ENCODE measurements at regions of chr2 and their contacts with region 1.

Region 1: DNA sequence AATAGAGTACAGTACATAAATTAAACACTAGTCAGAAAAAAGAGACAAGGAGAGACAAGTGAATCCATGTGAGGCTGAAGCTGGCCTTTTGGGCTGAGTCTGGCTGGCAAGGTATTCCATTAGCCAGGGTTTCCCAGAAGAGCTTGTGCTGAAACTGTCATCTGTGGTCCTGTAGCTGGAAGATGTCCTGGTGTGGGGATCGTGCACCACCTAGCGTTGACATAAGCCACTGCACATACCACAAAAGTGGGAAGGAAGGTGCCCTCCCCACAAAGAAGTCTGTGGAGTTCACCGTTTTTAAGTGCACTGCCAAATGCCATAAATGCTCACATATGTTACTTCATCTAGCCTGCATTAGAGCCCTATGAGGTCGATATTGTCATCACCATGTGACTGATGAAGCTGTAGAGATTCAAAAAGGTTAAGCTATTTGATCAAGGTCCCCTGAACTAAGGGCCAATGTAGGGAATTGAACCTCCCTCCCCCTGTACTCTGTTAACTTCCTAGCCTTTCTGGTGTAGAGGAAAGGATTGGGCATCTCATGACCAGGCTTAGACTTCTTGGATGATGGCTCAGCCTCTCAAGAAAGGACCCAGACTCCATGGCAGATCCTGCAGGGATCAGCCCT is 31.9 kb upstream of the GALNT14 start:
- DNase-seq: peak in 3 of 5 donors; percentile 22 to 47 (median 28)
- H3K4me3 ChIP-seq: no peak overlapping the region
- H3K27ac ChIP-seq: no peak overlapping the region
- H3K4me1 ChIP-seq: no peaks in the 10 kb centered on the region
- H3K27me3 ChIP-seq: no peaks in the 10 kb centered on the region
- CTCF ChIP-seq: peak in 2 of 3 donors; percentile 14 to 53
- EP300 ChIP-seq: no peak
- POLR2A ChIP-seq: no peak

Region 2: DNA sequence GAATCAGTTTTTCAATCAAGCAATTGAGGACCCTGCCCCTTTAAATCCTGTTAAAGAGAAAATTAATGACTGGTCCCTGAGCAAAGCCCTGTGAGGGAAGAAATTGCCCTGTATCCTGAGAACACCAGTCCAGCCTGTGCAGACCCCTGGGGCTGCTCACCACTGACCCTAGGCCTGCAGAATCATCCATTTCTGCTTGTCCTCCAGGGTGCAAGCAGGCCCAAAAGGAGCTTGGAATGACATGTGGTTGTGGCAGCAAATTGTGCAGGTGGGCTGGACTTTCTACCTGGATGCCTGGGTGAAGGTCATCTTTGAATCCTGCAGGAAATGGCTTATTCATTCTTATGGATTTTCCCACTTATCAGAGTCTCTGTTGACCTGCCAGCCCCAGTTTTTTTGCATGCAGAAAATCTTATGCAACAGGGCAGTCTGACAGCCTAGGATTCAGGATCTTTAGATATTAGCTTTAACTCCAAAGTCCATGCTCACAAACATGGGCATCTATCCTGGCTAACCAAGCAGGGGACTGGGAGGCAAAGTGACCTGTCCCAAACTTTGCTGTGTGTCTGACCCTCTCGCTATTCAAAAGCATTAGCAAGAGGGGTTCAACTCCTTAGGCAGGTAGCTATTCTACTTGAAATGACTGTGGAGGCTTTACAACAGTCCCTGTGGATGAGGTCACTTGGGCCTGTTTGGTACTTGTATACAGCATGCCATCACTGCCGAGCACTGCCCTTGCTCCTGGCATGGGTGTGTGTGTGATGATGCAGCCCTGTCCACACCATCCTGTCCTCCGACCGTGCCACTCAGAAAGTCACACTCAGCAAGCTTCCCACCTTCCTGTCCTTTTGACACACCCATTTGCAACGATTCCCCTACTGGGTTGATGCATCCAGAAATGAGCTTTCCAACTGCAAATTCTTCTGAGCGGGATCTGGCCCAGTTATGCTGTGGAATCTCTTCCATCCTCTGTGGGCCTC is 448.2 kb before region 1 on chr2:
- intact Hi-C with region 1: loop called in 3 of 4 experiments (anchors 1 to 10 kb)
- DNase-seq: no peak
- H3K4me3 ChIP-seq: no peak overlapping the region
- H3K27ac ChIP-seq: no peak overlapping the region
- H3K4me1 ChIP-seq: no peaks in the 10 kb centered on the region
- H3K27me3 ChIP-seq: no peaks in the 10 kb centered on the region
- CTCF ChIP-seq: no peak
- EP300 ChIP-seq: no peak
- POLR2A ChIP-seq: no peak

Region 3: DNA sequence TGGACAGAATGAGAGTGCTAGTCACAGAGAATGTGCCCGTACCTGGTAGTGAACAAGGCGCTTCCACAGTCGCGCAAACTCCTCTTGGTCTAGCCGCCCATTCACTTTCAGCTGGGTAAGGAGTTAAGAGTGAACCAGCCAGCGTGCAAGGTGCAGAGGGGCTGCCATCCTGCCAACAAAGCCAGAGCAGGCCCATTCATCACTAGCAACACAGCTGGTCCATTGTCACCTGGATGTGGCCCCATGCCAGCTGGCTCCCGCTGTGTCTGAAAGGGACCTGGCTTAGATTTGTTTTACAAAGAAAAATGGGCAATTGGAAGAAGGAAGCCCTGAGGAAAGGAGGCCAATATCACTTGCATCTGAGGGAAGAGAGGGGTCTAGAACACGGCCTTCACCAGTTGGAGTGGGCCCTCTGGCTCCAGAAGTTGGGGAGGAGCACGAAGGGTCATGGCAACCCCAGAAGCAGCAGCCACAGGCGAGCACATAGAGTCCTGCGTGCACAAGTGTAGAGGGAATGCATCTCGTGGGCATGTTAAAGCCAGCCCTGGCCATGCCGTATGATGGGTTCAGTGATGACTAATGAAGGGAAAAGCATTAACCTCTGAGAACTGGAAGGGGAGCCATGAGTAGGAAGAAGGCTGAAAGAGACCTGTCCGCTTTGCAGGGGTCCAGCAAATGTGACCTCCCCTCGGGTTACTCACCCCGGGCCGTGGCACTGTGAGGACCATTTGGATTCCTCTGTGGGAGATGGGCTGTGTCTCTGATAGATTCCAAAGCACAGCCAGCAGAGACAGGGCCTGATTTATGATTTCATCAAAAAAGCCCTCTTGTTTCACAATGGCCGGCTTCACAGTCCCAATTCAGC is 433.5 kb before region 1 on chr2:
- intact Hi-C with region 1: loop called in 1 of 4 experiments (anchors 10 kb)
- DNase-seq: no peak
- H3K4me3 ChIP-seq: no peak overlapping the region
- H3K27ac ChIP-seq: no peak overlapping the region
- H3K4me1 ChIP-seq: no peaks in the 10 kb centered on the region
- H3K27me3 ChIP-seq: no peaks in the 10 kb centered on the region
- CTCF ChIP-seq: no peak
- EP300 ChIP-seq: no peak
- POLR2A ChIP-seq: no peak

Region 4: GRCh38 chr2:31067259-31067658 is 102.9 kb before region 1 on chr2:
- intact Hi-C with region 1: no loop called
- DNase-seq: no peak
- H3K4me3 ChIP-seq: no peak overlapping the region
- H3K27ac ChIP-seq: no peak overlapping the region
- H3K4me1 ChIP-seq: no peaks in the 10 kb centered on the region
- H3K27me3 ChIP-seq: no peaks in the 10 kb centered on the region
- CTCF ChIP-seq: no peak
- EP300 ChIP-seq: no peak
- POLR2A ChIP-seq: no peak